Left colon (tissue), 2 donors: ENCODE measurements at regions of chr10 and their contacts with region 1.

Region 1: DNA sequence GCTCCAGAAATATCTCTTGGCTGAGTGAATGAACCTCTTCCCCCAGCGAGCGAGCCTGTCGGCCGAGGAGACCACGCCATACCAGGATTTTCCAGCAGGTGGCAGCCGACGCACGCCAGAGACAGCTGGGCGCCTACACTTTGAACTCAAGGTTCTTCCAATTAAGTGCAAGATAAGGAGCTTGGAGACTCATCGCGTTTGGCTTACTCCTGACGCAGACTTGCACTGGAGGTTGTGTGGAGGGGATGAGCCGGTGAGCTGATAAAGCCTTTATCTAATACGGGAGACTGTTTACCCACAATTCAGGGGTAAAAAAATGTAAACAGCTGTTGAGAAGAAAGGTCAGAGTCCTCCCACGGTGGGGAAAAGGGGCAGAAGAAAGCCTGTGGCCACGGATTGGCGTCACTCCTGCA is 45.9 kb upstream of the EMX2 start:
- DNase-seq: peak; percentile 53 to 79
- ATAC-seq: peak; percentile 97

Region 2: DNA sequence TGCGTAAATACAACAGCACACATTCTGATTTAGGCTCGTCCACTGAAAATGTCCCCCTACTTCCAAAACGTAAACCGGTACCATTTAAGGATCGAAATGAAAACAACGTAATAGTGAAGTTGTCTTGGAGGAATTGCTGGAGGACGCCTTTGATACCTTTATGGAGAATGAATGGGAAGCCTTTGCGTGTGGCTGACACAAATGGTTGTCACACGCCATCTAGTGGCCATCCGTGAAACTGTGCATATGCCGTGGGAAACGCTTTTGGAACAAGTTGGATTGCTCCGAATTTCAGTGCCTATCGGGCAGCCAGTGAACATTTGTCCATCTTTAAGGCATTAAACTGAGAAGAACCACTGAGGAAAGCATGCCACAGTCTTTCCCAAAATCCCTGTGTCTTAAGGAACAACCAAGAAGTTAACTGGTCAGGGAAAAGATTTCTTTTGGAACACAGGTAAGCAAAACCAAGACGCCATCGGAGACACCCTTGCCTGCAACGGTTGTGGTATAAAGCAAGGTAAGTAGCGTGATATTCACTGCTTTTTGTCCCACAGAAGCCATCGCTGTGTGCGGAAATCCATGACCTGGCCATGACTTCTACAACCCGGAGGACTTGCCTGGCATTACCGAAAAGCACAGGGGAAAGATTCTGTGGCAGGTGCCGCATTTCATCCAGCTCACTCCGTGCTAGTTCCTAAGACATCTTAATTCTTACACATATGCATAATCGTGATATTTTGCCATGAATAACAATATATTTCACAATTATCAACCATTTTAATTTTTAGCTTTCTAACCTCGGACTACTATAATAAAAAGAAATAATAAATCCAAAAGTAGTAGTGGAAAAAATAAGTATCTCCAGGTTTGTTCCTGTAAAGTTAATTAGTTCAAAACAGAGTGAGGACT is 744.9 kb after region 1 on chr10:
- intact Hi-C with region 1: loop called in 1 of 2 experiments (anchors 2 kb)
- DNase-seq: peak; percentile 37 to 84
- ATAC-seq: peak; percentile 74